Left cardiac atrium (tissue), 4 donors: ENCODE measurements at regions of chr13 and their contacts with region 1.

Region 1: DNA sequence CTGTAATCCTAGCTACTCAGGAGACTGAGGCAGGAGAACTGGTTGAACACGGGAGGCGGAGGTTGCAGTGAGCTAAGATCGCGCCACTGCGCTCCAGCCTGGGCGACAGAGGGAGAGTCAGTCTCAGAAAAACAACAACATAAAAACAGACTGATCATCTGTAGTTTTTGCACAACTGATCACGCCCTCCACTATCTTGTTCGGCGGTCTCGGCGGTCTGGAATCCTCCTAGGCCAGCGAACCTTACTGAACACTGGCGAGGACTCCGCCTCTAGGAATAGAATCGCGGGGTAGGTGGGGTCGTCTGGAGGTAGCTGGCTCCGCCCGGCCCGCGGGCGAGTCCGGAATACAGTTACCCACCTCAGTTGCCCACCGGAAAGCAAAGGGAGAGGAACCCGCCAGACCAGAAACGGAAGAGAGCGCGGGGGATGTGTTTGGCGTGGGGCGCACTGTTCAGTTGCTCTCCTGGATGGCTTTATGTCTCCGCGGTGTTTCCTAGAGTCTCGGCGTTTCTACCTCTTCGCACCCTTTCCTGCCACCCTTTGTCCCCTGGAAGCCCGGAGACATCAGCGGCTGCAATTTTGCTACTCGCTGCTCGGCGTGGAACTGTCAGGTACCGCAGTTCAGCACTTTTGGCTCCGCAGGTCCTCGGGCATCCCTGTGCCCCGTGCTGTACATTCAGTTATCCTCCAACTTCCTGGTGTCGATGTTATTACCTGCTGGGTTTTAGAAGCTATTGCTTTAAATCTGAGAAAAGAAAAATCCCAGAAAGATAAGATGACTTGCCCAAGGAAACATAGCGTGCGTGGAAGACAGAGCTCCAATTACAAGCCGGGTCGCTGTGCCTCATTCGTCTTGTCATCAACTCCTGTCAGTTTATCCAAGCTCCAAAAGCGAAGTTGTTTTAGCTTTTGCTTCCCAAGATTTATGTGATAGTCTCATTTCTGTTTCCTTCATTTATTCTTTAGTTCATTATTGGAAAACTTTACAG is 24.9 kb upstream of the HNRNPA1L2 start:
- DNase-seq: peak; percentile 83
- ATAC-seq: peak; percentile 99

Region 2: GRCh38 chr13:52652196-52652979 is 35.0 kb after region 1 on chr13 and contains the start of gene SUGT1:
- intact Hi-C with region 1: loop called in 1 of 2 experiments (anchors 2 kb)
- DNase-seq: peak; percentile 98
- ATAC-seq: peak; percentile 99
- total RNA-seq, gene SUGT1: 48.7 to 56.2 TPM